AG04450 (cell line): ENCODE measurements at regions of chr16 and their contacts with region 1.

Region 1: GRCh38 chr16:52068447-52069074 is 478.4 kb downstream of the TOX3 start:
- DNase-seq: no peak
- H3K4me3 ChIP-seq: no peak overlapping the region
- H3K27ac ChIP-seq: no peak overlapping the region
- H3K27me3 ChIP-seq: no peaks in the 10 kb centered on the region
- CTCF ChIP-seq: no peak

Region 2: DNA sequence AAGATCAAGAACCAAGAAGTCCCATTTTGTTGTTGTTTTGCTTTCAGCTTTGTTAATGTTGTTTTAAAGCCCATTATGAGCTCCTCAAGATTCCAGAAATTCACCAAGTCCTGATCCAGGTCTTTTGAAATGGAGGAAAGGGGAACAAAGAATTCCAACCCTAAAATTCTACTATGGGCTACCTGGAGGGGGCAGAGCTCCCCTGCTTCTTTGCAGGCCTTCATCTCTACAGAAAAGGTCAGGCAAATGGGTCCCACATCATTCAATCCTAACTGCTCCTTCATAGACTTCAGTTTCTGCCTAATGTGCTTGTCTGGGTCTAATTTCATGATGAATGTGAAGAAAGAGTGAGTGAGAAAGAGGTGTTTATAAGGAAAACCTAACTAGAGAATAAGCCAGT is 102.9 kb after region 1 on chr16:
- CTCF ChIA-PET with region 1: no interaction called
- POLR2A ChIA-PET with region 1: no interaction called
- DNase-seq: no peak
- H3K4me3 ChIP-seq: no peak overlapping the region
- H3K27ac ChIP-seq: no peak overlapping the region
- H3K27me3 ChIP-seq: no peaks in the 10 kb centered on the region
- CTCF ChIP-seq: no peak

Region 3: DNA sequence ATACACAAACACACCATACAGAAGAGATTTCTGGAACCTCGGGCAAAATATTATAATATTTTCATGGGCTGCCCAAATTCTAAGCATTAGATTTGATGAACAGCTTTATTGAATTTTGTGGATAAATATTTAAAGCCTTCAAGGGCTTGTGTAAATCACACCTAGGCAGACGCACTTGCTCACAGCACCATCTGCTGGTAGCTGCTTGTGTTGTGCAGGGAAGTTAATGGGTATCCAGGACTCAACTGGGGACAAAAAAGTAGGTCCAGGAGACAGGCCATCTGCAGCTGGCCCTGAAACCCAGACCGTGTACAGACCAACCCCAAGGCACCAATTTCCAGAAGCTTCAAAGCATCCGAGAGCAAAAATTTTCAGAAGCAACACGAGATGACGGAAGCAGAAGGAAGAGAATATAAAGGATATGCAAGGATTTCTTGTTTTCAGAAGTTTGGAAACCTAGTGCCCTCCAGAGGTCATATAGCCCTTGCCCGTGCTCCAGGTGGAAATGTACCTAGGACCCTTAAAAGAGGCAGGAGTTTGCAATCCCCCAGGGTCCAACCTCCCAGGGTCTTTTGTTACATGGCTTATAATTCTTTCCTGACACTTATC is 844.1 kb after region 1 on chr16:
- CTCF ChIA-PET with region 1: interaction called, 14 read pairs
- POLR2A ChIA-PET with region 1: no interaction called
- DNase-seq: peak; percentile 6
- H3K4me3 ChIP-seq: no peak overlapping the region
- H3K27ac ChIP-seq: no peak overlapping the region
- H3K27me3 ChIP-seq: no peaks in the 10 kb centered on the region
- CTCF ChIP-seq: peak; percentile 70